ENCODE measurements at regions of chr2 and their contacts with region 1.

Region 1: GRCh38 chr2:225288986-225289385 is 110.5 kb upstream of the NYAP2 start:
- DNase-seq: no peak
- ATAC-seq: no peak
- H3K4me3 ChIP-seq: no peak overlapping the region
- H3K27ac ChIP-seq: no peak overlapping the region
- H3K4me1 ChIP-seq: no peaks in the 10 kb centered on the region
- H3K27me3 ChIP-seq: no peaks in the 10 kb centered on the region
- CTCF ChIP-seq: no peak

Region 2: DNA sequence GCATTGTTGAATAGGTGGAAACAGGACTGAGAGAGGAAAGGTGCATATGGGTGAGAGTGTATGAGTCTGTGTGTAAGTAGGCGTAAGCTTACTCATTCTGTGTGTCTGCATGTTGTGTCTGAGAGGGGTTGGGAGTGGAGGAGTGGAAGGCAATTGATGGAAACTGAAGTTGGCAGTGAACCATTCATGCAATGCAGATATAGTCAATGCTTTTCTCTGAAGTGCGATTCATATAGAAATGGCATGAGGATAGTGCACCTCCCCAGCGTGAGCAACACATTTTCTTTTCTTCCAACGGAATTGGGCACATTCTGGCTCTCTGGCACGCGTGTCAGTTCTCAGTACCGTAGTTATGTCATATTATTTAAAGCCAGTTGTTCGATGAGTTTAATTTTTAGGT is 361.1 kb after region 1 on chr2:
- CTCF ChIA-PET with region 1: no interaction called
- POLR2A ChIA-PET with region 1: no interaction called
- in situ Hi-C with region 1: no loop called
- intact Hi-C with region 1: loop called (anchors 5 kb)
- DNase-seq: no peak
- ATAC-seq: no peak
- H3K4me3 ChIP-seq: no peak overlapping the region
- H3K27ac ChIP-seq: no peak overlapping the region
- H3K4me1 ChIP-seq: no peaks in the 10 kb centered on the region
- H3K27me3 ChIP-seq: peaks cover 5% of the 10 kb centered on the region; the same call in 1 of the 2 replicates
- CTCF ChIP-seq: no peak

Measured in Panc1 (cell line).